K562 (cell line): ENCODE measurements at regions of chr2 and their contacts with region 1.

Region 1: GRCh38 chr2:70070541-70071268 is 16.6 kb upstream of the PCBP1 start:
- DNase-seq: peak; percentile 75 to 87 (median 81)
- ATAC-seq: peak; percentile 96
- H3K4me3 ChIP-seq: no peak overlapping the region
- H3K27ac ChIP-seq: peak overlapping the region; percentile 47; the same call in 1 of the 3 replicates
- H3K4me1 ChIP-seq: peaks cover 2 to 5% of the 10 kb centered on the region in 2 experiments; a peak in 3 of 5 replicates
- H3K27me3 ChIP-seq: no peaks in the 10 kb centered on the region
- CTCF ChIP-seq: peak; percentile 88 to 95 (median 89)
- EP300 ChIP-seq: no peak
- POLR2A ChIP-seq: no peak
- RAD21 ChIP-seq: peak; percentile 91 to 94

Region 2: GRCh38 chr2:70009762-70010575 is 60.7 kb before region 1 on chr2:
- CTCF ChIA-PET with region 1: no interaction called
- POLR2A ChIA-PET with region 1: no interaction called
- in situ Hi-C with region 1: no loop called
- intact Hi-C with region 1: loop called (anchors 2 kb)
- DNase-seq: peak; percentile 63 to 74 (median 69)
- ATAC-seq: peak; percentile 75
- H3K4me3 ChIP-seq: no peak overlapping the region; the same call in 1 of the 2 replicates
- H3K27ac ChIP-seq: peak overlapping the region; percentile 72
- H3K4me1 ChIP-seq: peaks cover 30 to 41% of the 10 kb centered on the region in 2 experiments
- H3K27me3 ChIP-seq: no peaks in the 10 kb centered on the region
- CTCF ChIP-seq: no peak
- EP300 ChIP-seq: no peak
- POLR2A ChIP-seq: no peak
- RAD21 ChIP-seq: no peak

Region 3: GRCh38 chr2:70029814-70030409 is 40.8 kb before region 1 on chr2:
- CTCF ChIA-PET with region 1: no interaction called
- POLR2A ChIA-PET with region 1: no interaction called
- in situ Hi-C with region 1: no loop called
- intact Hi-C with region 1: no loop called
- DNase-seq: peak; percentile 80 to 92 (median 87)
- ATAC-seq: peak; percentile 96
- H3K4me3 ChIP-seq: no peak overlapping the region
- H3K27ac ChIP-seq: peak overlapping the region; percentile 76
- H3K4me1 ChIP-seq: peaks cover 17 to 27% of the 10 kb centered on the region in 2 experiments; a peak in 4 of 5 replicates
- H3K27me3 ChIP-seq: no peaks in the 10 kb centered on the region
- CTCF ChIP-seq: peak in 1 of 3 experiments; percentile 6; a peak in 1 of 6 replicates
- EP300 ChIP-seq: peak; percentile 34; the same call in 1 of the 2 replicates
- POLR2A ChIP-seq: peak; percentile 66
- RAD21 ChIP-seq: no peak; a peak in 1 of 4 replicates

Region 4: GRCh38 chr2:70214953-70215549 is 144.3 kb after region 1 on chr2:
- CTCF ChIA-PET with region 1: no interaction called
- POLR2A ChIA-PET with region 1: no interaction called
- in situ Hi-C with region 1: no loop called
- intact Hi-C with region 1: no loop called
- DNase-seq: no peak
- ATAC-seq: no peak
- H3K4me3 ChIP-seq: no peak overlapping the region
- H3K27ac ChIP-seq: no peak overlapping the region
- H3K4me1 ChIP-seq: no peaks in the 10 kb centered on the region
- H3K27me3 ChIP-seq: no peaks in the 10 kb centered on the region
- CTCF ChIP-seq: no peak
- EP300 ChIP-seq: no peak
- POLR2A ChIP-seq: no peak
- RAD21 ChIP-seq: no peak